ENCODE measurements at regions of chr5 and their contacts with region 1.

Region 1: DNA sequence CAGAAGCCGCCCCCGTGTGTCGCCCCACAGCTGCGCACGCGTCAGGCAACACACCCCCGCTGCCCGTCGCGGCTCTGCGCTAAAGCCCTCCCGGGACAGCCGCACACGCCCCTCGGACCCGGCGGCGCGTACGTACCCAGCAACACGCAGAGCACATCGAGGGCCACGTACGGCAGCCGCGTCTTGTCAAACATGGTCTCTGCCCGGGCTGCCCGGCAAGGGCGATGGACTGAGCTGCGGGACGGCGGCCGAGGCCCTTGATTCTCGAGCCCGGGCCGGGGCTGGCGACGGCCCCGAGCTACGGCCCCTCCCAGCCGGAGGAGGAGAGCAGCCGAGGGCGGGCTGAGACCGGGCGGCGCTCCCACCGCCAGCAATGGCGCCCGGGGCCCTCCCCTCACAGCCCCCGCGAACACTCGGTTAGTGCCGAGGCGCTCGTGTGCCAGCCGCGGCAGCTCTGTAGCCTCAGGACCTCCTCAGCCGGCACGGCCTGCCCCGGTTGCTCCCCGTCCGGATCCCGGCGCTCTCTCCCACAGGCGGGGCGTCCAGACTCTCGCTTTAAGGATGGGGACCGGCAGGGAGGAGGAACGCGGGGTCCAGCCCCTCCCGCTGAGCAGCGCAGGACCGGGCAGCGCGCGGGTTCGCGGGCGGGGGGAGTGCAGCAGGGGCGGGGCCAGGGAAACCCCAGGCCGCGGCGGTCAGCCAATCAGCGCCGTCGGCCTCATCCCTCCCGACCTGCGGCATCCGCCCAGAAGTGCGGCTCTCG is at the start of gene PLPP1:
- DNase-seq: peak; percentile 83
- H3K4me3 Mint-ChIP-seq: peak within 1 kb of the TSS; percentile 82
- H3K27ac Mint-ChIP-seq: peak within 1 kb of the TSS; percentile 86
- H3K4me1 Mint-ChIP-seq: peaks cover 29% of the 10 kb centered on the region
- H3K27me3 Mint-ChIP-seq: no peaks in the 10 kb centered on the region
- total RNA-seq, gene PLPP1: 7.3 to 8.3 TPM

Region 2: DNA sequence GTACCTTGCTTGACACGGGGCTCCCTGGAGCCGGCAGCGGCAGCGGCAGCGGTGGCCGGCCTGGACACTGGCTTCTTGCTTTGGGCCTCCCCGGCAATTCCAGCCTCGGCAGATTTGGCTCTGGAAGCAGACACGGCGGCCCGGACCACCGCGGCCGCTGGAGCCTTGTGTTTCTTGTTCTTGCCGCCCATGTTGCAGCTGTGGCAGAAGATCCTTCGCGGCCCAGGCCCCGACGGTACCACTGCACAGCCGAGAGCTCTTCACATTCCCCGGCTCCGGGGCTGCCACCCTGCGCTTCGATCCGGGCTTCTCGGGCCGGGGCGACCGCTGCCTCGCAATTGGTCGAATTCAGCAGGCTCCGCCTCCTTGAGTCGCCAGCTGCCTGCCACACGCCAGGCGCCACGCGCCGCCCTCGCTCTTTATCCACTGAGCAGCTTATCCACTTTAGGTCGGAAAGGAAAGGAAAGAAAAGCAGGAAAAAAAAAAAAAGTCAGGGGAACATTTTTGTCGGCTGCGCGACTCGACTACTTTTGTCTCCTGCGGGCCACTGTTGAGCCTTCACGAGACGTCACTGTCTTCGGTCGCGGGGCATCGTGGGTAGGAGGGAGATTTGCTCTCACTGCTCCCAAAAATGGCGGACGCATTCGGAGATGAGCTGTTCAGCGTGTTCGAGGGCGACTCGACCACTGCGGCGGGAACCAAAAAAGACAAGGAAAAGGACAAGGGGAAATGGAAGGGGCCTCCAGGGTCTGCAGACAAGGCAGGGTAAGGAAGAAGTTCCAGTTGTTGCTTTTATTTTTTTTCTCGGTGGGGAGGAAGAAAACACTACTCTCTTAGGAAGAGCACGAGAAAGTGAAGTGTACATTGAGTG is 227.0 kb before region 1 on chr5 and contains the starts of genes DHX29 and MTREX:
- CTCF ChIA-PET with region 1: no interaction called
- intact Hi-C with region 1: loop called (anchors 1 kb)
- DNase-seq: peak; percentile 94
- H3K4me3 Mint-ChIP-seq: no peak within 1 kb of the TSS
- H3K27ac Mint-ChIP-seq: no peak within 1 kb of the TSS
- H3K4me1 Mint-ChIP-seq: peaks cover 33% of the 10 kb centered on the region
- H3K27me3 Mint-ChIP-seq: no peaks in the 10 kb centered on the region
- total RNA-seq, gene DHX29: 11.0 to 11.1 TPM
- total RNA-seq, gene MTREX: 76.1 to 79.7 TPM

Region 3: GRCh38 chr5:55421074-55421529 is 113.5 kb before region 1 on chr5:
- CTCF ChIA-PET with region 1: no interaction called
- intact Hi-C with region 1: loop called (anchors 2 kb)
- DNase-seq: peak; percentile 49
- H3K4me3 Mint-ChIP-seq: no peak overlapping the region
- H3K27ac Mint-ChIP-seq: no peak overlapping the region
- H3K4me1 Mint-ChIP-seq: peaks cover 33% of the 10 kb centered on the region
- H3K27me3 Mint-ChIP-seq: no peaks in the 10 kb centered on the region

Region 4: DNA sequence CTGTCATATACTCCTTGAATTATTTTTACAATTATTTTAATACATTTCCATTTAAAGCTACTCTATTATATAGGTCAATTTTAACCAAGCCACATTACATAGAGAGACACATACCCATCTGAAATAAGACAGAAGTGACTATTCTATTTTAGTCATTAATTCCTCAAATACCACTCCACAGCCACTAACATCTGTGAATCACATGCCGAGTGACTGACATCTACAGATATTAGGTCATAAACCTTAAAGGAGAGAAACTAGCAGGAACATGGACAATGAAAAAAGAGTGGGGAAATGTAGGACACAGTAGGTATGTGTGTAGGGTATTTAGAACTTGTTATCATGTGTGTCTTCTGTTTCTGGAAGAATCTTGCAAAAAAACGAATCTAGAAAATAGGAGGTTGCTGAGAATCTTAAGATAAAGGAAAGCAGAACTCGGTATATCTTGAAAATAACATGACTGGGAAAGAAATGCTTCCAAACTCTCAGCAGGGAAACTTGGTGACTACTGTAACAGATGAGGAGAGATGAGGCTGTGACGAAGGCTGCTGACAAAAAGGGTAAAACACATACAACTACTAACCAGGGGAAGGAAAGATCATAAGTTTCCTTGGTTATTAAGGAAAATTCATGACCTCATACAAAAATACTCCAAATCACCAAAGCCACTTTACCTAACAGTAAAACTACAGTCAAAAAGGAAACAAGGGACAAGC is 84.4 kb before region 1 on chr5:
- CTCF ChIA-PET with region 1: no interaction called
- intact Hi-C with region 1: no loop called
- DNase-seq: no peak
- H3K4me3 Mint-ChIP-seq: no peak overlapping the region
- H3K27ac Mint-ChIP-seq: no peak overlapping the region
- H3K4me1 Mint-ChIP-seq: peaks cover 2% of the 10 kb centered on the region
- H3K27me3 Mint-ChIP-seq: no peaks in the 10 kb centered on the region

Region 5: DNA sequence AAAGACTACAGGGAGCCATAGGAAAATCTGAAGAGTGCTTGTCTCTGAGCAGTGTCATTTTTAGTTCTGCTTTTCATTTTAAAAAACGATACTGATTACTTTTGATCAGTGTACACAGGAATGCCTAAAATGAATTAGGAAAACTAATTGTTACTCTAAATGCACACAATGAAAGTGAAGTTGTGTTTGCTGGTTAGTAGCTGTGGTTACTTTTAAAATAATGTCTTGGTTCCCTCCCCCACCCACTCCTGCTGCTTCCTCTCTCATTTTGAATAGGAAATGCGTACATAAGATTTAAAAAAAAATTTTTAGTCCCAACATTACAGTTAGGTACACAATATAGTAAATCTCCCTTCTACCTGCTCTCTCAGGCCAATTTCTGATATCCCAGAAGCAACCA is 47.6 kb after region 1 on chr5:
- CTCF ChIA-PET with region 1: no interaction called
- intact Hi-C with region 1: loop called (anchors 2 kb)
- DNase-seq: peak; percentile 50
- H3K4me3 Mint-ChIP-seq: no peak overlapping the region
- H3K27ac Mint-ChIP-seq: no peak overlapping the region
- H3K4me1 Mint-ChIP-seq: peaks cover 12% of the 10 kb centered on the region
- H3K27me3 Mint-ChIP-seq: no peaks in the 10 kb centered on the region

Region 6: DNA sequence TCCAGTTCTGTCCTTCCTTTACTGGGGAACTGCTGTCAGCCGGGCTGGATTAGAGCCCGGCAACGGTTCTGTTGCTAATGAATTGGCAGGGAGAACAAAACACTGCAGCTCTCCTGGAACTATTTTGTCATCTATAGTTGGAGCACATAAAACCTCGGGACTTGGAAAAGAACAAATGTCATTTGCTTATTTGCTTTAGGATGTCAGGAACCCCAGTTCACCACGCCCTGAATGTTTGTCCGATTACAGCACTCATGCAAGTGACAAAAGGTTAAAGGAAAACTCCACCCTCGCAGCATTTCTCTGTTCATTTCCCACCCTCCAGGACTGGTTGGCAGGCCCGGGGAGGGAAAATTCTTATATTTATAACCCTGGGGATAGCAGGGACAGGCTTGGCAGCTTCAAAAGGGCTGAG is 66.6 kb after region 1 on chr5:
- CTCF ChIA-PET with region 1: no interaction called
- intact Hi-C with region 1: loop called (anchors 2 kb)
- DNase-seq: peak; percentile 23
- H3K4me3 Mint-ChIP-seq: peak overlapping the region; percentile 34
- H3K27ac Mint-ChIP-seq: no peak overlapping the region
- H3K4me1 Mint-ChIP-seq: peaks cover 24% of the 10 kb centered on the region
- H3K27me3 Mint-ChIP-seq: no peaks in the 10 kb centered on the region

Region 7: GRCh38 chr5:55650386-55650785 is 115.8 kb after region 1 on chr5:
- CTCF ChIA-PET with region 1: no interaction called
- intact Hi-C with region 1: loop called (anchors 5 kb)
- DNase-seq: peak; percentile 16
- H3K4me3 Mint-ChIP-seq: no peak overlapping the region
- H3K27ac Mint-ChIP-seq: no peak overlapping the region
- H3K4me1 Mint-ChIP-seq: peaks cover 24% of the 10 kb centered on the region
- H3K27me3 Mint-ChIP-seq: no peaks in the 10 kb centered on the region

Measured in activated naive CD4-positive, alpha-beta T cell treated with anti-CD3 and anti-CD28 coated beads for 36 hours (primary cell).